CD4-positive, alpha-beta T cell (primary cell): ENCODE measurements at regions of chr19 and their contacts with region 1.

Region 1: DNA sequence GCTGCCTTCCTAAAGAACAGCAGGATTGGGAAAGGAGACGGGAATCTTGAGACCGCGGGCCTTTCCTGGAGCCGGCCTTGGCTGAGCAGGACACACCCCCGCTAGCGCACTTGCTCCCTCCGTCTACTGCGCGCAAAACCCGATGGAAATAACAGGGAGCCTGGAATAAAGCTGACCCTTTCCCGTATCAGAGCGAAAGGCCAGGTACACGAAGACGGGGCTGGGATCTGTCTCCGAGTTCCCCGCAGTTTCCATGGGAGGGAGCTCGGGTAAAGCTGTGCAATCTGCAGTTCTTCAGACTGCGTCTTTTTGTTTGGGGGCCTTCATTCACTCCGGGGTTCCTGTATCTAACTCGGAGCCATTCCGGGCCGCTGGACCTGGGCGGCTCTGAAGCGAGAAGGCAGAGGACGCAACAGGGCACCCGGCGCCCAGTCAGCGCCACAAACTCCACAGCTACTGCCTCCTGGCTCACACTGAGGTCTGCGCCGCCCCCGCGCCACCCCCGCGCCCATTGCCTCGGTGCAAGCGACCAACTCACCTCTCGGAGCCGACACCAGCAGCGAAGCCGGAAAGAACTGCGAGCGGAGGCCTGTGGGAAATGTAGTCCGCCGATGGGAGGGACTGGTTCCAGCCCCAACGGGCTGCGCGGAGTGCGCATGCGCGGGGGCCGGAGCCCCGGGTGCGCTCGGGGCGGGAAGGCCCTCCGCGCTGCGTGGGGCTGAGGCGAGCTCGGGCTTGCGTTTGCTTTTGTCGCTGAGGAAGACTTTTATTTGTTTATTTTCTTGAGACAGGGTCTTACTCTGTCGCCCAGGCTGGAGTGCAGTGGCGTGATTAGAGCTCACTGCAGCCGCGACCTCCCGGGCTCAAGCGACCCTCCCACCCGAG is at the start of gene ZFP14:
- DNase-seq: peak; percentile 89 to 97 (median 93)
- ATAC-seq: peak; percentile 97
- H3K4me3 ChIP-seq: peak within 1 kb of the TSS; percentile 77
- H3K4me3 Mint-ChIP-seq: peak within 1 kb of the TSS; percentile 98
- H3K27ac ChIP-seq: peak within 1 kb of the TSS; percentile 74 to 84
- H3K27ac Mint-ChIP-seq: peak within 1 kb of the TSS; percentile 99
- H3K4me1 ChIP-seq: peaks cover 18% of the 10 kb centered on the region
- H3K4me1 Mint-ChIP-seq: peaks cover 21% of the 10 kb centered on the region
- H3K27me3 ChIP-seq: no peaks in the 10 kb centered on the region
- H3K27me3 Mint-ChIP-seq: no peaks in the 10 kb centered on the region
- CTCF ChIP-seq: peak; percentile 39
- total RNA-seq, gene ZFP14: 3.7 to 4.4 TPM

Region 2: GRCh38 chr19:36401475-36401874 is 22.6 kb after region 1 on chr19:
- CTCF ChIA-PET with region 1: no interaction called
- POLR2A ChIA-PET with region 1: no interaction called
- intact Hi-C with region 1: no loop called
- DNase-seq: no peak
- ATAC-seq: no peak
- H3K4me3 ChIP-seq: no peak overlapping the region
- H3K4me3 Mint-ChIP-seq: no peak overlapping the region
- H3K27ac ChIP-seq: no peak overlapping the region
- H3K27ac Mint-ChIP-seq: no peak overlapping the region
- H3K4me1 ChIP-seq: no peaks in the 10 kb centered on the region
- H3K4me1 Mint-ChIP-seq: no peaks in the 10 kb centered on the region
- H3K27me3 ChIP-seq: no peaks in the 10 kb centered on the region
- H3K27me3 Mint-ChIP-seq: no peaks in the 10 kb centered on the region
- CTCF ChIP-seq: no peak

Region 3: DNA sequence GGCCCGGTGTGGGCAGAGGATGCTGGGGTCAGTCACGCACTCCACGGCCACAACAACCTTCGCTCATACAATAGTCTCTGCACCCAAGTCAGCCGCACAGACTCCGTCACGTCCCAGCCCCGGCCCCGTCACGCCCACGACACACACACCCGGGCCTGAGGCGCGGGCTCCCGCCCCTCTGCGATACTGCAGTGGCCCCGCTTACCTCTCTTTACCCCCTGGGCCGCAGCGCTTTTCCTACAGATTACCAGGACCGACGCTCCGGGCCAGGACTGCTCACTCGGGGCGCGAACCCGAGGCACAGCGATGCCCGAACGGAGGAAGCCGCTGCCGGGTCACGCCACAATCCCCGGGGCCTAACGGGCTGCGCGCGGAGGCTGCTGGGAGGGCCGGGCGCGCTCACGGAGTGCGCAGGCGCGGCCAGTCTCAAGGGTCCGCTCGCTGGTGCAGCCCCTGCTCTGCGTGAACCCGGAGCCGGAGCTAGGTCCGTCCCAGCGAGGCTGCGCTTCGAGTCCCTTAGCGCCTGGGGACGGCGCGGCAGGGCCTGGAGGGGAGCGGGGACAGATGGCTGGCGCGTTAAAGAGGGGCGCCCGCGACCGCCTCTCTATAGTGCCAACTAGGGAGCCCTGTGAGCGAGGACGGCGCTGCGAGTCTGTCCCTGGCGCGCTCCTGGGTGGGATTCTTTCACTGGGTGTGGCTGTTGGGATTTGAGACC is 39.6 kb after region 1 on chr19 and contains the start of gene ZFP82:
- CTCF ChIA-PET with region 1: no interaction called
- POLR2A ChIA-PET with region 1: no interaction called
- intact Hi-C with region 1: loop called in 1 of 2 experiments (anchors 5 kb)
- DNase-seq: peak; percentile 54 to 86 (median 70)
- ATAC-seq: peak; percentile 86
- H3K4me3 ChIP-seq: peak within 1 kb of the TSS; percentile 93
- H3K4me3 Mint-ChIP-seq: peak within 1 kb of the TSS; percentile 95
- H3K27ac ChIP-seq: peak within 1 kb of the TSS; percentile 51 to 78
- H3K27ac Mint-ChIP-seq: peak within 1 kb of the TSS; percentile 93
- H3K4me1 ChIP-seq: peaks cover 19% of the 10 kb centered on the region
- H3K4me1 Mint-ChIP-seq: peaks cover 27% of the 10 kb centered on the region
- H3K27me3 ChIP-seq: peaks cover 16 to 23% of the 10 kb centered on the region in 2 experiments
- H3K27me3 Mint-ChIP-seq: peaks cover 29% of the 10 kb centered on the region
- CTCF ChIP-seq: no peak
- total RNA-seq, gene ZFP82: 3.4 to 3.8 TPM

Region 4: DNA sequence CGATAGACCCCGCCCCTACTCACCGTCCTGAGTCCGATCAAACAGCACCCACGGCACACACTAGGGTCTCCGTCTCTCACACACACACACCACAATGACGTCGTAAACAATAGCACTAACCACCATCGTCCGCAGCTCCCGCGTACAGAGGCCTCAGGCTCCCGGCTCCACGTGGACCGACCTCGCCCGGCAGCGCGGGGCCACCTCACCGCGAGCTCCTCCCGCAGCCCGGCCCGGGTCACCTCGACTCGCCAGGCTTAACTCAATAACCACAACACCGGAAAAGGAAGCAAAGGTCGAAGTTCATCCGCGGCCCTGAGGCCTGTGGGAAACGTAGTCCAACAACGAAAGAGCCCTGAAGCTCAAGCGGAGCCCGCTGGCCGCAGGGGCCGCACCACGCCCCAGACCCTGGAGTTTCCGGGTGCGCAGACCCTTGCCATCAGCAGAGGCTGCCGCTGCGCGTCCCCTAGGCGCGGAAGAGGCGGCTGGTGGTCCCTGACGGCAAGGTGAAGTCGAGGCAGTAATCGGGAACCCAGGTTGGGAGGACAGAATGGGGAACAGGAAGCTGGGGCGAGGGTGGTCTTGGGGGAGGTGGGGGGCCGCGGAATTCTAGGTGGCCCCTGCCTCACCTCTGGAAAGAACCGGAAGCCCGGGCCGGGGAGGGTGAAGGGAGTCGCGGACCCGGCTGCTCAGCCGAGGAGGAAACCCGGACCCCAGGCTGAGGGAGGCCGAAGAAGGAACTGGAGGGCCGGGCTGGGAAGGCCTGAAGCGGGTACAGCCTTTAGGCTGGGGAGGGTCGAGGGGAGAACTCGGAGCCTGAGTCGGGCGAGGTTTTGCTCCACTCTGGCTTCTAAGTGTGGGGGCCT is 194.4 kb after region 1 on chr19 and contains the start of gene ZNF529:
- CTCF ChIA-PET with region 1: no interaction called
- POLR2A ChIA-PET with region 1: interaction called, 7 read pairs
- intact Hi-C with region 1: loop called (anchors 1 to 2 kb)
- DNase-seq: peak; percentile 69 to 94 (median 78)
- ATAC-seq: peak; percentile 92
- H3K4me3 ChIP-seq: peak within 1 kb of the TSS; percentile 88
- H3K4me3 Mint-ChIP-seq: peak within 1 kb of the TSS; percentile 94
- H3K27ac ChIP-seq: peak within 1 kb of the TSS; percentile 89 to 97
- H3K27ac Mint-ChIP-seq: peak within 1 kb of the TSS; percentile 93
- H3K4me1 ChIP-seq: peaks cover 25% of the 10 kb centered on the region
- H3K4me1 Mint-ChIP-seq: peaks cover 39% of the 10 kb centered on the region
- H3K27me3 ChIP-seq: no peaks in the 10 kb centered on the region
- H3K27me3 Mint-ChIP-seq: no peaks in the 10 kb centered on the region
- CTCF ChIP-seq: no peak
- total RNA-seq, gene ZNF529: 39.6 to 42.7 TPM

Region 5: GRCh38 chr19:36915992-36916830 is 537.3 kb after region 1 on chr19 and contains the starts of genes ZNF568 and ZNF829:
- CTCF ChIA-PET with region 1: no interaction called
- POLR2A ChIA-PET with region 1: no interaction called
- intact Hi-C with region 1: loop called (anchors 2 to 5 kb)
- DNase-seq: peak; percentile 83 to 97 (median 90)
- ATAC-seq: peak; percentile 97
- H3K4me3 ChIP-seq: peak within 1 kb of the TSS; percentile 92
- H3K4me3 Mint-ChIP-seq: peak within 1 kb of the TSS; percentile 90
- H3K27ac ChIP-seq: peak within 1 kb of the TSS; percentile 89 to 97
- H3K27ac Mint-ChIP-seq: peak within 1 kb of the TSS; percentile 88
- H3K4me1 ChIP-seq: peaks cover 19% of the 10 kb centered on the region
- H3K4me1 Mint-ChIP-seq: peaks cover 44% of the 10 kb centered on the region
- H3K27me3 ChIP-seq: no peaks in the 10 kb centered on the region
- H3K27me3 Mint-ChIP-seq: no peaks in the 10 kb centered on the region
- CTCF ChIP-seq: peak; percentile 74
- total RNA-seq, gene ZNF568: 3.0 to 4.2 TPM
- total RNA-seq, gene ZNF829: 3.8 to 4.4 TPM

Region 6: GRCh38 chr19:37217855-37218591 is 839.2 kb after region 1 on chr19 and contains the start of gene ZNF383:
- CTCF ChIA-PET with region 1: no interaction called
- POLR2A ChIA-PET with region 1: interaction called, 5 read pairs
- intact Hi-C with region 1: loop called in 1 of 2 experiments (anchors 5 kb)
- DNase-seq: peak; percentile 66 to 90 (median 78)
- ATAC-seq: peak; percentile 81
- H3K4me3 ChIP-seq: peak within 1 kb of the TSS; percentile 94
- H3K4me3 Mint-ChIP-seq: peak within 1 kb of the TSS; percentile 93
- H3K27ac ChIP-seq: peak within 1 kb of the TSS; percentile 81 to 90
- H3K27ac Mint-ChIP-seq: peak within 1 kb of the TSS; percentile 89
- H3K4me1 ChIP-seq: peaks cover 14% of the 10 kb centered on the region
- H3K4me1 Mint-ChIP-seq: peaks cover 42% of the 10 kb centered on the region
- H3K27me3 ChIP-seq: no peaks in the 10 kb centered on the region
- H3K27me3 Mint-ChIP-seq: no peaks in the 10 kb centered on the region
- CTCF ChIP-seq: no peak
- total RNA-seq, gene ZNF383: 13.1 to 15.7 TPM